Activated B cell treated with CpG ODN at 0.5 μM for 24 hours (primary cell): ENCODE measurements at regions of chr3 and their contacts with region 1.

Region 1: DNA sequence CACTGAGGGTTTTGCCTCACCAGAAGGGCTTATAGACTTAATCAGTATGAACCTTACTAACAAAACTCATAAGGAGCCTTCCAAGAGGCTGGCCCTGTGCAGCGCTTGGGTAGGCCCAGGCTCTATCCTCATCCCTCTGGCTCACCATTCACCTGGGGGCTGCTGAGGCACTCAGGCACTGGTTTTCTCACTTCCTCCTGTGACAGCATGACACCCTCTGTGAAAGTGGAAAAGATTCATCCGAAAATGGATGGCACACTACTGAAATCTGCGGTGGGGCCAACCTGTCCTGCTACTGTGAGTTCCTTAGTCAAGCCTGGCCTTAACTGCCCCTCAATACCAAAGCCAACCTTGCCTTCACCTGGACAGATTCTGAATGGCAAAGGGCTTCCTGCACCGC is 41.3 kb downstream of the PSMD6 start:
- DNase-seq: no peak
- ATAC-seq: no peak
- H3K4me3 Mint-ChIP-seq: no peak overlapping the region
- H3K27ac Mint-ChIP-seq: peak overlapping the region; percentile 42
- H3K4me1 Mint-ChIP-seq: peaks cover 15% of the 10 kb centered on the region
- H3K27me3 Mint-ChIP-seq: no peaks in the 10 kb centered on the region
- CTCF ChIP-seq: no peak

Region 2: DNA sequence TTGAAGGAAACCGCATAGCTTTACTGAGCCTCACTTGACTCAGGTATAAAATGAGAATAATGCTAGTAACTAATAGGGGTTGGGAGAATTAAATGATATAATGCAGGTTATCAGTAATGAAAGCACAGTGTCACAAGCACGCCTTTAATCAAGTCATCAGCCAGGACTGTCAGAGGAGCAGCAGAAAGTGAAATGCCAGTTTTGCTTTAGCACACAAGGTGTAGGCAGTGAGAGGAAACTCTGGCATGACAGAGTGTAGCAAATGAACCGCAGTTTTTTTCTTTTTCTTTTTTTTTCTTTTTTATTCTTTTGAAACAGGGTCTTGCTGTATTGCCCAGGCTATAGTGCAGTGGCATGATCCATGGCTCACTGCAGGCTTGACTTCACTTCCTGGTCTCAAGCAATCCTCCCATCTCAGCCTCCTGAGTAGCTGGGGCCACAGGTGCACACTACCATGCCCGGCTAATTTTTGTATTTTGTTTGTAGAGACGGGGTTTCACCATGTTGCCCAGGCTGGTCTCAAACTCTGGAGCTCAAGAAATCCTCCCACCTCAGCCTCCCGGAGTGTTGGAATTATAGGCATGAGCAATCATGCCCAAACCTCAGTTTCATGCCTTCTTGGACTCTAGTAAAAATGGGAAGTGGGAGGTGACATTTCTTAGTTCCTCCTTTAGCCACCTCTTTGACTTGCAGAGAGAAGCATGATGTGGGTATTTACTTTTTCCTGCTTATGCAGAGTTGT is 60.1 kb before region 1 on chr3:
- CTCF ChIA-PET with region 1: no interaction called
- POLR2A ChIA-PET with region 1: no interaction called
- intact Hi-C with region 1: no loop called
- DNase-seq: peak; percentile 27
- ATAC-seq: peak; percentile 89
- H3K4me3 Mint-ChIP-seq: peak overlapping the region; percentile 56
- H3K27ac Mint-ChIP-seq: peak overlapping the region; percentile 84
- H3K4me1 Mint-ChIP-seq: peaks cover 89% of the 10 kb centered on the region
- H3K27me3 Mint-ChIP-seq: no peaks in the 10 kb centered on the region
- CTCF ChIP-seq: no peak

Region 3: DNA sequence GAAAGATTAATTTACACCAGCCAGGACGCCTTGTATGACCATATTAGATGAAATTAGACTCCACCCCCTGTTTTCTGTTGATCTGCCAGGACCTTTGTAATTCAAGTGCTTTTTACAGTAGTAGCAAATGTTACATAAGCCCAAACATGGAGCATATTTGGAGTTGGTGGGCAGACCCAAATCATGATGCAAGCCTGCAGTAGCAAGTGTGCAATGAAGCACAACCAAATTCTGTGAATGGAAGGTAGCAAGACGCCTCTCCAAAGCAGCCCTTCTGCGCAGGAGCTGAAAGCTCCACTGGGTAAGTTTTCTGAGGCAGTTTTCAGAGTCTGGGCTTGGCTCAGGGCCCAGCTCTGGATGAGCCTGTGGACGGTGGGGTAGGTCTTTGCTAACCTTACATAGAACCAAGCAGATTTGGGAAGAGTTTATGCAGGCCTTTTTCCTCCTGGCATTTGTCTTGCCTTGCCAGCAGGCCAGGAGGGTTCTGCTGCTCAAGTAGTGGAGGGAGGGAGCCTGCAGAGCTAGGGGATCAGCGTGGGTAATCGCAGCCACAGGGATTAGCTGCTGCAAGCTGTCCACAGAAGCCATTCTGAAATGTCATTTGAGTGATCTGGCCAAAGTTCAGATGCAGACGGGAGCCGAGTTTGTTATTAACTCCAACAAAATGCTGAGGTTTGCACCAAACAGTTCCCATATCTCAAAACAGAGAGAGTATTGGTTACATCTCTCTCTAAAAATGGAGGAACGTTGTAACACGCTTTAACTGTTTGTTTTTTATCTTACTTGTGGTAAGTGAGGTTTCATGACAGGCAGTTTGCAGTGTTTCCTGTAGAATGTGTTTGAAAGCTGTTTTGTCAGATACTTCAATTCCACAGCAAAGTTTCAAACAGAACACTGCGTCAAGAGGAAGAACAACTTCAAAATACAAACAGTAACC is 14.0 kb before region 1 on chr3:
- CTCF ChIA-PET with region 1: interaction called, 11 read pairs
- POLR2A ChIA-PET with region 1: no interaction called
- intact Hi-C with region 1: loop called (anchors 2 kb)
- DNase-seq: no peak
- ATAC-seq: peak; percentile 71
- H3K4me3 Mint-ChIP-seq: peak overlapping the region; percentile 51
- H3K27ac Mint-ChIP-seq: peak overlapping the region; percentile 38
- H3K4me1 Mint-ChIP-seq: peaks cover 48% of the 10 kb centered on the region
- H3K27me3 Mint-ChIP-seq: no peaks in the 10 kb centered on the region
- CTCF ChIP-seq: no peak